ENCODE measurements at regions of chr1 and their contacts with region 1.

Region 1: GRCh38 chr1:222643938-222644635 is 26.2 kb downstream of the MIA3 start:
- DNase-seq: peak; percentile 100
- H3K4me3 Mint-ChIP-seq: peak overlapping the region; percentile 95
- H3K27ac Mint-ChIP-seq: peak overlapping the region; percentile 94
- H3K4me1 Mint-ChIP-seq: peaks cover 28% of the 10 kb centered on the region
- H3K27me3 Mint-ChIP-seq: no peaks in the 10 kb centered on the region

Region 2: DNA sequence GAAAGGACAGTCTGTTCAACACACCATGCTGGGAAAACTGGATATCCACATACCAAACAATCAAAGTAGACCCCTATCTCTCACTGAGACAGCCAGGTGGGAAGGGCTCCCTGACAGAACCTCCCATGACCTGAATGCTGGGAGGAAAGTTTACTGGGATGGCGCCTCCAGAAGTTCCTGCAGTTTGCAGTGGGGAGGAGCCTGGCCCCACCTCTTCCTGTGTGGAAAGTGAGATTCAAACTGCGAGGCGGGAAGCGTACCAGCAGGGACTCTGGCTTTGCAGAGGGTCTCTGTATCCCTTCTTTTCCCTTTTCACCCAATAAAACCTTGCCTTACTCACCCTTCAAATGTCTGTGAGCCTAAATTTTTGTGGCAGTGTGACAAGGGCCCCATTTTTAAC is 286.8 kb before region 1 on chr1:
- intact Hi-C with region 1: no loop called
- DNase-seq: no peak
- H3K4me3 Mint-ChIP-seq: no peak overlapping the region
- H3K27ac Mint-ChIP-seq: no peak overlapping the region
- H3K4me1 Mint-ChIP-seq: no peaks in the 10 kb centered on the region
- H3K27me3 Mint-ChIP-seq: no peaks in the 10 kb centered on the region

Region 3: GRCh38 chr1:222570837-222571236 is 73.2 kb before region 1 on chr1:
- intact Hi-C with region 1: no loop called
- DNase-seq: no peak
- H3K4me3 Mint-ChIP-seq: no peak overlapping the region
- H3K27ac Mint-ChIP-seq: no peak overlapping the region
- H3K4me1 Mint-ChIP-seq: no peaks in the 10 kb centered on the region
- H3K27me3 Mint-ChIP-seq: no peaks in the 10 kb centered on the region

Region 4: GRCh38 chr1:222589462-222590302 is 54.4 kb before region 1 on chr1 and contains the start of gene TAF1A:
- intact Hi-C with region 1: loop called (anchors 1 kb)
- DNase-seq: peak; percentile 95
- H3K4me3 Mint-ChIP-seq: peak within 1 kb of the TSS; percentile 96
- H3K27ac Mint-ChIP-seq: peak within 1 kb of the TSS; percentile 95
- H3K4me1 Mint-ChIP-seq: peaks cover 33% of the 10 kb centered on the region
- H3K27me3 Mint-ChIP-seq: peaks cover 4% of the 10 kb centered on the region
- total RNA-seq, gene TAF1A: 23.1 and 24.4 TPM in 2 replicates